Ascending aorta (tissue), 2 donors: ENCODE measurements at regions of chrX and their contacts with region 1.

Region 1: DNA sequence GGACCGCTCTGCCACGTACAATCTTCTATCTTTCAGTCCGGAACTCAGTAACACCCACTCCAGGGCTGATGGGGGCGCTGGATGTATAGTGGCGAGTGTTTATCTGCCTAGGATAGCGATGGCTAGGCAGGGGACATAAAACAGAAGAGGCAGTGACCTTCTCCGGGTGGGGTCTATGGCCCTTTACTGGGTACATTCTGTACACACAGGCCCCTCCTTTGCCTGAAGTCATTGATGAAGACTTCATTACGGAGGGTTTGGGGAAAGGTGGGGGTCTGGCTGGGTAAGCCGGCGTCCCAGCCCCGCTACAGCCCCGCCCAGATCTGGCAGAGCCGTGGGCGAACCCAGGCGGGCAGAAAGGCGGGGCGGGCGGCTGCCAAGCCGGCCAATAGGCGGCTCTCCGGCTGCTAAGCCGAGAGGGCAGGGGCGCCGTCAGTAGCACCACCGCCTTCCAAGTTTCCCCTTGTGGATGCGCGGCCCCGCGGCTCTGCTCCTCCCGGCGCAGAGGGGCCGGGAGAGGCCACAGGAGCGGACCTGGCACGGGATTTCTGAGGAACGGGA is at the start of gene CHST7:
- DNase-seq: peak in 1 of 2 donors; percentile 79
- H3K4me3 ChIP-seq: peak within 1 kb of the TSS; percentile 67 to 81
- H3K27ac ChIP-seq: peak within 1 kb of the TSS; percentile 57 to 67
- H3K4me1 ChIP-seq: no peaks in the 10 kb centered on the region
- H3K27me3 ChIP-seq: no peaks in the 10 kb centered on the region
- CTCF ChIP-seq: peak; percentile 8 to 16 (median 13)
- total RNA-seq, gene CHST7: 64.6 TPM

Region 2: GRCh38 chrX:46588263-46588662 is 14.9 kb after region 1 on chrX:
- intact Hi-C with region 1: loop called (anchors 2 kb)
- DNase-seq: peak in 1 of 2 donors; percentile 83
- H3K4me3 ChIP-seq: peak overlapping the region in 1 of 2 donors; percentile 6
- H3K27ac ChIP-seq: peak overlapping the region; percentile 60 to 64
- H3K4me1 ChIP-seq: peaks cover 3 to 24% of the 10 kb centered on the region in 2 donors
- H3K27me3 ChIP-seq: no peaks in the 10 kb centered on the region
- CTCF ChIP-seq: no peak

Region 3: DNA sequence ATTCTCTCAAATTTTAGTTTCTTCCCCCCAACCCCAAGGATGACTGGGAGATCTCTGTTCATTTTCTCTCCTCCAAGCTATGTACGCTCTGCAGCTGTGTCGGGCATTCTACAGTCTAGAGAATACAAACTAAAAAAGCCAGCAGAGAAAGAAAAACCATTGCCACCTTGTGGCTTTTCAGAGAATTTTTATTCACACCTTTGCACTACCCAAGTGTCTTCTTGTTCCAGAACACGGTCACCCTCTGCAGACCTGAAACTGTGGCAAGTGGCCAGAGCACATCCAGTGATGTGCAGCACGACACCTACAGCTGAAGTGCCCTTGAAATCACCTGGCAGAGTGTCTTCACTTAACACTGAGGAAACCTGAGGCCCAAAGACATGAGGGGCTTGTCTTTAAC is 68.7 kb after region 1 on chrX:
- intact Hi-C with region 1: loop called (anchors 1 kb)
- DNase-seq: no peak
- H3K4me3 ChIP-seq: no peak overlapping the region
- H3K27ac ChIP-seq: no peak overlapping the region
- H3K4me1 ChIP-seq: no peaks in the 10 kb centered on the region
- H3K27me3 ChIP-seq: no peaks in the 10 kb centered on the region
- CTCF ChIP-seq: peak in 1 of 3 experiments; percentile 51

Region 4: DNA sequence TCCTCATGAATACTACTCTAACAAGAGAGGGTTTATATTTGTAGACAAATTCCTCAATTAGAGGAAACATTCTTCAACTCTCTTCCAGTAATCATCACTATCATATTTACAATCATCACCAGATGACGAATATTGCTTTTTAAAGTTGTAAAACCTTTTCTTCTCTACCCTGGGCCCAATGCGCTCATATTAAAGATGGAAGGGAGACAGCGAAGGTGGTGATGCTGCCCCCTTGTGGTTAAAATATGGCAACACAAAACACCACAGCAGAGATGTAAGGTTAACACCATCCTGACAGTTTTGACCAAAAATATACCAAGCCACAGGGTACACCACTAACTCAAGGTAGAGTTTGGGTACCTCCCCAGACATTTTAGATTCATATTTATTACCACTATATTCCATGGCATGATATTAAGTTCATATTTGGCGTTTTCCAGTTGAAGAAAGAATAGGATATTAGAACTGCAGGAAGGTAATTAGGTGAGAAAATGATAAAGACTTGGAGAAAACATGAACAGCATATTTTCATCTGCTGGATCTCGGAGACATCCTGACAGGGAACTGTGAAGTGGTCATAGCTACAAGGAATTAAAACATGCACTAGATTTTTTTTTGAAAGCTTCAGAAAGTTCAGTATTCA is 112.7 kb after region 1 on chrX:
- intact Hi-C with region 1: loop called (anchors 5 kb)
- DNase-seq: peak in 1 of 2 donors; percentile 67
- H3K4me3 ChIP-seq: no peak overlapping the region
- H3K27ac ChIP-seq: no peak overlapping the region
- H3K4me1 ChIP-seq: no peaks in the 10 kb centered on the region
- H3K27me3 ChIP-seq: no peaks in the 10 kb centered on the region
- CTCF ChIP-seq: peak; percentile 28 to 60 (median 43)

Region 5: DNA sequence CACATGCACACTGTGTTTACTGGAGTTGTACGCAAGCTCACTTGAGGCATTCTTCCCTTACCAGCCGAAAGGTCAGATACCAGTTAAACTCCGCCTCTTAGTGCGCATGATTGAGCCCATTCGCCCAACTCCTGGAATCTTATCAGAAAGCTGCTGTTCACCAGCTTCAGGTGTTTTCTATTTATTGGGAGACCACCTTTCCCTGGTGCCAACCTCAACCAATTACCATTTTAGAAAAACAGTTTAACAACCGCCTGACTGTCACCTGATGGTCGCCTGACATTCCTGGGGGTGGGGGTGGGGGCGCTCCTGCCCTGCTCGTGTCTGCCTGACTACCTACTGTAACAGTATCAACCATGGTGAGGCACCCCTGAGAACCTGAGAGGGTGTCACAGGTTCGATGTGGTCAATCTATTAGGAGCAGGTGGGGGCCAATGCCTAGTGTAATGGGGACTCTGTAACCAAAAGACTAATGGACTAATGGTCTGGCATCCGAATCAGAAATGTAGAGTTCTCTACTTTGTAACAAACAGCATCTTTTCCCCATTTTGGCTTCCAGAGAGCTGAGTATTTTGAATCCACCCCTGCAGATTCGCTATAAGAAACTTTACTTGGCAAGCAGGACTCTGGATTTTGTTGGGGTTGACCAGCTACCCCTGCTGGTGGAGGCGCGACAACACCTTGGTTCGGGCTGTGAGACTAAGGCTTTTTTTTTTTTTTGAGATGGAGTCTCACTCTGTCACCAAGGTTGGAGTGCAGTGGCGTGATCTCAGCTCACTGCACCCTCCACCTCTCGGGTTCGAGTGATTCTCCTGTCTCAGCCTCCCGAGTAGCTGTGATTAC is 738.7 kb after region 1 on chrX:
- intact Hi-C with region 1: no loop called
- DNase-seq: no peak
- H3K4me3 ChIP-seq: no peak overlapping the region
- H3K27ac ChIP-seq: no peak overlapping the region
- H3K4me1 ChIP-seq: no peaks in the 10 kb centered on the region
- H3K27me3 ChIP-seq: no peaks in the 10 kb centered on the region
- CTCF ChIP-seq: peak in 2 of 3 experiments; percentile 27 to 34